Heart right ventricle (tissue), 16 donors: ENCODE measurements at regions of chr14 and their contacts with region 1.

Region 1: GRCh38 chr14:24710403-24711112 is 76.6 kb upstream of the GZMB start:
- DNase-seq: peak; percentile 22 to 61
- ATAC-seq: peak in 7 of 8 donors; percentile 51 to 84 (median 73)
- H3K4me3 ChIP-seq: peak overlapping the region in 6 of 10 donors; percentile 19 to 48 (median 38)
- H3K27ac ChIP-seq: no peak overlapping the region
- H3K4me1 ChIP-seq: peaks cover 0 to 5% (median 0%) of the 10 kb centered on the region in 9 donors
- H3K27me3 ChIP-seq: peaks cover 0 to under 1% (median 0%) of the 10 kb centered on the region in 7 donors
- CTCF ChIP-seq: peak; percentile 68 to 90 (median 84)

Region 2: GRCh38 chr14:24734878-24735500 is 24.4 kb after region 1 on chr14:
- intact Hi-C with region 1: no loop called
- DNase-seq: peak in 1 of 2 donors; percentile 66
- ATAC-seq: peak in 6 of 8 donors; percentile 42 to 83 (median 72)
- H3K4me3 ChIP-seq: no peak overlapping the region
- H3K27ac ChIP-seq: no peak overlapping the region
- H3K4me1 ChIP-seq: peaks cover 0 to 5% (median 0%) of the 10 kb centered on the region in 9 donors
- H3K27me3 ChIP-seq: no peaks in the 10 kb centered on the region
- CTCF ChIP-seq: peak; percentile 58 to 91 (median 80)

Region 3: GRCh38 chr14:25132732-25133422 is 422.3 kb after region 1 on chr14:
- intact Hi-C with region 1: loop called in 1 of 10 experiments (anchors 1 kb)
- DNase-seq: peak; percentile 44 to 51
- ATAC-seq: peak; percentile 92 to 97 (median 96)
- H3K4me3 ChIP-seq: peak overlapping the region in 3 of 10 donors; percentile 6 to 9 (median 8)
- H3K27ac ChIP-seq: no peak overlapping the region
- H3K4me1 ChIP-seq: peaks cover 0 to 9% (median 0%) of the 10 kb centered on the region in 9 donors
- H3K27me3 ChIP-seq: peaks cover 0 to 34% (median 11%) of the 10 kb centered on the region in 7 donors
- CTCF ChIP-seq: peak; percentile 77 to 93 (median 87)

Region 4: GRCh38 chr14:25150934-25151790 is 440.6 kb after region 1 on chr14:
- intact Hi-C with region 1: loop called in 3 of 10 experiments (anchors 2 to 5 kb)
- DNase-seq: no peak
- ATAC-seq: no peak
- H3K4me3 ChIP-seq: no peak overlapping the region
- H3K27ac ChIP-seq: no peak overlapping the region
- H3K4me1 ChIP-seq: peaks cover 0 to 4% (median 0%) of the 10 kb centered on the region in 9 donors
- H3K27me3 ChIP-seq: peaks cover 0 to 6% (median 0%) of the 10 kb centered on the region in 7 donors
- CTCF ChIP-seq: peak; percentile 54 to 90 (median 83)

Region 5: GRCh38 chr14:25400607-25401206 is 690.1 kb after region 1 on chr14:
- intact Hi-C with region 1: loop called in 8 of 10 experiments (anchors 10 kb)
- DNase-seq: peak in 1 of 2 donors; percentile 6
- ATAC-seq: no peak
- H3K4me3 ChIP-seq: no peak overlapping the region
- H3K27ac ChIP-seq: no peak overlapping the region
- H3K4me1 ChIP-seq: no peaks in the 10 kb centered on the region
- H3K27me3 ChIP-seq: peaks cover 0 to 8% (median 0%) of the 10 kb centered on the region in 7 donors
- CTCF ChIP-seq: peak; percentile 42 to 83 (median 71)

Region 6: GRCh38 chr14:25411781-25412757 is 701.5 kb after region 1 on chr14:
- intact Hi-C with region 1: loop called in 9 of 10 experiments (anchors 10 kb)
- DNase-seq: no peak
- ATAC-seq: no peak
- H3K4me3 ChIP-seq: no peak overlapping the region
- H3K27ac ChIP-seq: no peak overlapping the region
- H3K4me1 ChIP-seq: no peaks in the 10 kb centered on the region
- H3K27me3 ChIP-seq: peaks cover 0 to 7% (median 0%) of the 10 kb centered on the region in 7 donors
- CTCF ChIP-seq: peak in 5 of 9 donors; percentile 11 to 38 (median 29)